ENCODE measurements at regions of chr3 and their contacts with region 1.

Region 1: DNA sequence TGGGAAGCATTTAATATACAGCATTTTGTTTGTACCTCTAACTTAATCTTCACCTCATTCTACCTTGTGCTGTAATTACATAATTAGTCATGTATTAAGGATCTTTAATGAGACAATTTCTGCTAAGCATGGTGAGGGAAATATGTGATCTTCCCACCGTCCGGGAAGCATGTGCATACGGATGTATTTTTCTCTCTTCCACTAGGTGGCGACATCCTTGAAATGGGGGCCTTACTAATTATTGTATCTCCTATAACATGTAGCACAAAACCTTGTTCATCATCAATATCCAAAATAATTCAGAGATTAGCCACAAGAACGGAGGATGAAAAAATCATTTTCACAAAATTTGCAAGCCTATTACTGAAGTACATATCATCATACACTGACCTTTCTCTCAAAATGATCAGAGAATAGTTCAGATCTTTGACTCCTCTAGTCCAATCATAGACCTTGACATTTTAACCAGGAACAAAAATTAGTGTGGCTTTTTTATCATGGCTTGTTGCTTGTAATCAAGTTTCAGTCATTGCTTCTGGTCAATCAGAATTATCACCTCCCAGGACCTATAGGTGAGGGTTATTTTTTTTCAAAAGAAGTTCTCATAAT is 148.9 kb upstream of the GBE1 start:
- DNase-seq: peak; percentile 45
- H3K4me3 ChIP-seq: no peak overlapping the region
- H3K27ac ChIP-seq: no peak overlapping the region
- H3K4me1 ChIP-seq: no peaks in the 10 kb centered on the region
- H3K27me3 ChIP-seq: peaks cover 0 to 2% of the 10 kb centered on the region in 2 experiments
- CTCF ChIP-seq: peak; percentile 55 to 64
- POLR2A ChIP-seq: no peak

Region 2: GRCh38 chr3:81666493-81667121 is 243.7 kb before region 1 on chr3:
- CTCF ChIA-PET with region 1: interaction called, 5 read pairs
- POLR2A ChIA-PET with region 1: no interaction called
- dilution Hi-C with region 1: no loop called
- intact Hi-C with region 1: loop called (anchors 1 kb)
- DNase-seq: peak; percentile 60
- H3K4me3 ChIP-seq: no peak overlapping the region
- H3K27ac ChIP-seq: no peak overlapping the region
- H3K4me1 ChIP-seq: no peaks in the 10 kb centered on the region
- H3K27me3 ChIP-seq: no peaks in the 10 kb centered on the region
- CTCF ChIP-seq: peak; percentile 43 to 52
- POLR2A ChIP-seq: no peak

Region 3: DNA sequence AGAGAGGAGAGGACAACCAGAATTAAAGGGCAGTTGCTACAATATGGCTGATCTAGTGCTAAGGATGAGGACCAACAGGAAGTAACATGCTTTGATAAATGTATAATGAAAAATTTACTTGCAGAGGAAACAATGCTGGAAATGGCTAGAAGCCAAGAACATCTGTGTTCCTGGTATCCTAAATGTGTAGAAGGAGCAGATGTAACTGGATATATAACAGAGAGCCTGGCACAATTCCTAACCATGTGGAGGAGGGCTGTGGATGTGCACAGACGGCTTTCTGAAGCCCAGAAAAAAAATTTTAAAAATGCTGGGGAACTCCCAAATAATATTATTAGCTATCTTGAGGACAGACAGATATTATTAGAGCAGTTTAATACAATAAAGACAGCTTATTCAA is 10.5 kb after region 1 on chr3:
- CTCF ChIA-PET with region 1: interaction called, 12 read pairs
- POLR2A ChIA-PET with region 1: no interaction called
- dilution Hi-C with region 1: no loop called
- intact Hi-C with region 1: no loop called
- DNase-seq: no peak
- H3K4me3 ChIP-seq: no peak overlapping the region
- H3K27ac ChIP-seq: no peak overlapping the region
- H3K4me1 ChIP-seq: no peaks in the 10 kb centered on the region
- H3K27me3 ChIP-seq: peaks cover 0 to 4% of the 10 kb centered on the region in 2 experiments
- CTCF ChIP-seq: no peak
- POLR2A ChIP-seq: no peak

Region 4: GRCh38 chr3:81974751-81975150 is 64.4 kb after region 1 on chr3:
- CTCF ChIA-PET with region 1: no interaction called
- POLR2A ChIA-PET with region 1: no interaction called
- dilution Hi-C with region 1: no loop called
- intact Hi-C with region 1: loop called (anchors 10 kb)
- DNase-seq: no peak
- H3K4me3 ChIP-seq: no peak overlapping the region
- H3K27ac ChIP-seq: no peak overlapping the region
- H3K4me1 ChIP-seq: no peaks in the 10 kb centered on the region
- H3K27me3 ChIP-seq: no peaks in the 10 kb centered on the region
- CTCF ChIP-seq: no peak
- POLR2A ChIP-seq: no peak

Region 5: DNA sequence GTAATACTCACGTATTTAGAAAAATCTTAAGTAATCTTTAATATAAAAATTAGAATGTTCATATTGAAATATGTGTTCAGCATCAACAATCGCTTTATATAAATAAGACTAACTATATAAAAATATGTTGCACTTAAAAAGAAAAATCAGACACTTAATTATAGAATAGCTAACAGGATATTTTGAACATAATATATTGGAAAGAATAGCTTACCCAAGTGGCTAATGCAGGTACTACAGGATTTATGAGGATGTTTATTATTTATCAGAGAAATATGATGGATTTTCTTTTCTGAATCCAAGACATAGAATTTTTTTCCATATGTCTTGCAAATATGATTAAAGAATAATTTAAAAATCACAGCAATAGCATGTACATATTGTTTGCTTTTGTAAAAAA is 419.0 kb after region 1 on chr3:
- CTCF ChIA-PET with region 1: interaction called, 8 read pairs
- POLR2A ChIA-PET with region 1: no interaction called
- dilution Hi-C with region 1: no loop called
- intact Hi-C with region 1: loop called (anchors 2 kb)
- DNase-seq: peak; percentile 2
- H3K4me3 ChIP-seq: no peak overlapping the region
- H3K27ac ChIP-seq: no peak overlapping the region
- H3K4me1 ChIP-seq: no peaks in the 10 kb centered on the region
- H3K27me3 ChIP-seq: no peaks in the 10 kb centered on the region
- CTCF ChIP-seq: peak in 1 of 2 donors; percentile 3
- POLR2A ChIP-seq: no peak

Region 6: DNA sequence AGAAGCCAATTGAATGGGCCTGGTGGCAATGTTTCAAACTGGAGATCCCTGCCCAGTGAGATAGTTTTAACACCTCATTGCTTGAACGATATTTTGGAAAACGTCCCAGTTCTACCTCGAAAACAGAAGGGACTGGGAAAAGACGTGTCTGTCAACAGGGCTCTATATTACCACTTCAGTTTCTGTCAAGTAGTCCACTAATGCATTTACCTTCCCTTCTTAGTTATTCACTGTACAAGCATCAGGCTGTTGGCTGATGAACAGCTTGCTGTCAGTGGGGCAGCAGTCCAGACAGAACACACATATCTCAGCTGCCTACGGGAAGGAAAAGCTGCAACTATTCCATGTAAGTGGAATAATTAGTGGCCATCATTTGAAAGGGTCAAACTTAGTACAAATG is 645.8 kb after region 1 on chr3:
- CTCF ChIA-PET with region 1: no interaction called
- POLR2A ChIA-PET with region 1: no interaction called
- dilution Hi-C with region 1: no loop called
- intact Hi-C with region 1: no loop called
- DNase-seq: no peak
- H3K4me3 ChIP-seq: no peak overlapping the region
- H3K27ac ChIP-seq: no peak overlapping the region
- H3K4me1 ChIP-seq: no peaks in the 10 kb centered on the region
- H3K27me3 ChIP-seq: no peaks in the 10 kb centered on the region
- CTCF ChIP-seq: no peak
- POLR2A ChIP-seq: no peak